CD4-positive, alpha-beta T cell (primary cell): ENCODE measurements at regions of chr2 and their contacts with region 1.

Region 1: DNA sequence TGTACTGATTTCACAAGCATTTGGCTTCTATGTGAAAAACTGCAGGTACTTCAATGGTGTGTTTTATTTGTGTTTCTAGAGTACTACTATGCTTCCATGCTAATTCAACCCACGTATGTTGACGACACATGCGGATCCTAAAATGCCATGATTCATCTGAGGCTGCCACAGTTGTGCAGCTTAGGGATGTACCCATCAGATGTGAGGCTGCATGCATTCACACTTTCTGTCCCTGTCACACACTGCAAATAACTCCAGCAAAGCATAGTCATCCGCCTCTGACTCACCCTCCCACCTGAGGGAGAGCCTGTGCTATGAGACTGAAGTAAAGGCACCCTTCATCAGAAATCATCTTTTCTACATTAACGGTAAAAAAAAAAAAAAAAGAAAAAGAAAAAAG is 22.1 kb upstream of the SERTAD2 start:
- DNase-seq: peak in 8 of 14 experiments; percentile 18 to 63 (median 30)
- ATAC-seq: peak; percentile 91
- H3K4me3 ChIP-seq: no peak overlapping the region
- H3K4me3 Mint-ChIP-seq: no peak overlapping the region
- H3K27ac ChIP-seq: no peak overlapping the region
- H3K27ac Mint-ChIP-seq: peak overlapping the region; percentile 40
- H3K4me1 ChIP-seq: peaks cover 9% of the 10 kb centered on the region
- H3K4me1 Mint-ChIP-seq: peaks cover 56% of the 10 kb centered on the region
- H3K27me3 ChIP-seq: no peaks in the 10 kb centered on the region
- H3K27me3 Mint-ChIP-seq: no peaks in the 10 kb centered on the region
- CTCF ChIP-seq: no peak

Region 2: GRCh38 chr2:64695721-64696261 is 19.9 kb after region 1 on chr2:
- CTCF ChIA-PET with region 1: no interaction called
- POLR2A ChIA-PET with region 1: interaction called, 14 read pairs
- intact Hi-C with region 1: no loop called
- DNase-seq: no peak
- ATAC-seq: no peak
- H3K4me3 ChIP-seq: no peak overlapping the region
- H3K4me3 Mint-ChIP-seq: no peak overlapping the region
- H3K27ac ChIP-seq: no peak overlapping the region
- H3K27ac Mint-ChIP-seq: no peak overlapping the region
- H3K4me1 ChIP-seq: peaks cover 16% of the 10 kb centered on the region
- H3K4me1 Mint-ChIP-seq: peaks cover 46% of the 10 kb centered on the region
- H3K27me3 ChIP-seq: no peaks in the 10 kb centered on the region
- H3K27me3 Mint-ChIP-seq: no peaks in the 10 kb centered on the region
- CTCF ChIP-seq: no peak

Region 3: DNA sequence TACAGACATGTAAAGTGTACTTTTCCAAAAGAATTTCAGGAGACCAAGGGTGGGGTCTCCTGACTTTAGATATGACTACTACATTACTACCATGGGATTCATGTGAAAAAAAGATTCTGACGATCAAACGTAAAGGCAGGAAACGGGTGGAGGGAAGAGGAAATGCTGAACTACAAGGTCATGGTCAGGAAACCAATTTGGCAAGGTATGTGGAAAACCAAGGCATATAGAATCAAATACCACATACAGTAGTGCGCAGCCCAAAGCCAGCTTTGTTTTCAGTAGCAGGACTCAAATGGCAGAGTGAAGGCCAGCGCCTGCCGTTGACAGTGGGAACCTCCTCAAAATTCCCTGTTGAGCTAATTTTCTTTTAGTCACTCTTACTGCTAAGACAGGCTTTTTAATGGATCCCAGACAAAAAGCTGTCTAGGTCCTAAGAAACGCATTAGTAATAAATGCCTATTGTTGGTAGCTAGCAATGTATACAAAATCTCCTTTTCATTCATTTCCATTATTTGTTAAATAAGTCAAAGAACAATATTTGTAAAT is 35.5 kb after region 1 on chr2:
- CTCF ChIA-PET with region 1: no interaction called
- POLR2A ChIA-PET with region 1: no interaction called
- intact Hi-C with region 1: loop called in 1 of 2 experiments (anchors 1 kb)
- DNase-seq: peak in 4 of 14 experiments; percentile 16 to 50 (median 21)
- ATAC-seq: peak; percentile 55
- H3K4me3 ChIP-seq: no peak overlapping the region
- H3K4me3 Mint-ChIP-seq: peak overlapping the region; percentile 32
- H3K27ac ChIP-seq: no peak overlapping the region
- H3K27ac Mint-ChIP-seq: no peak overlapping the region
- H3K4me1 ChIP-seq: peaks cover 9% of the 10 kb centered on the region
- H3K4me1 Mint-ChIP-seq: peaks cover 18% of the 10 kb centered on the region
- H3K27me3 ChIP-seq: no peaks in the 10 kb centered on the region
- H3K27me3 Mint-ChIP-seq: no peaks in the 10 kb centered on the region
- CTCF ChIP-seq: no peak